Dendritic cell treated with granulocyte-macrophage colony-stimulating factor and Interleukin-4, amounts not matched to agents 40 ng/mL and 50 ng/mL, for 4 days (primary cell): ENCODE measurements at regions of chr3 and their contacts with region 1.

Region 1: DNA sequence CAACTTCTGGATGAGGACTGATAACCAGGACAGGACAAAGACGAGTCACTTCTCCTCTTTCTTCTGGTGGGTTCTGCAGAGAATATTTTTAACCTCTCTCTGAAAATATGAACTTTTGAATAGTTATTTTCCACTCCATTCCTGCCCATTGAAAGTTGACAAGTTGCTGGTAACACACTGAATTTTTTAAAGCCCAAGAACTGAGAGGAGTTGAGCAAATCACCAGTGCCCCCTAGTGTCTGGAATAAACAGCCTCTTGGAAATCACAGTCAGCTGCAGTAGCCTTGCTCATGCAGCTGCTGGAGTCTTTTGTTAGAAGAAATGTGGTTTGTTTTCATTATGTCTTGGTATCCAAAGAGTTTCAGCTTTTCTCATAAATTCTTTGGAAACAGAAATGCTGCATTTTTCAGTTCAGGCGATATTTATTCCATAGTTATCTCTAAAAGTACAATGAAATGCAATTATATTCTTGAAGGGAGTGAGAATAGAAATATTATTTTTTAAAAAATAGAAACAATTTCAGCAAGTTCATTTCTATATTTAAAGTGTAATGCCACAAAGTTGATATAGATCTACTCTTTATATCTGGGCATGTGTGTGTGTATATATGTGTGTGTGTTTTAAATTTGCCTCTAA is 741.0 kb upstream of the CBLB start:
- H3K4me3 Mint-ChIP-seq: no peak overlapping the region
- H3K27ac Mint-ChIP-seq: no peak overlapping the region
- H3K4me1 Mint-ChIP-seq: no peaks in the 10 kb centered on the region
- H3K27me3 Mint-ChIP-seq: no peaks in the 10 kb centered on the region

Region 2: GRCh38 chr3:105527949-105528348 is 1081.8 kb before region 1 on chr3:
- intact Hi-C with region 1: loop called (anchors 10 kb)
- H3K4me3 Mint-ChIP-seq: no peak overlapping the region
- H3K27ac Mint-ChIP-seq: no peak overlapping the region
- H3K4me1 Mint-ChIP-seq: no peaks in the 10 kb centered on the region
- H3K27me3 Mint-ChIP-seq: no peaks in the 10 kb centered on the region

Region 3: GRCh38 chr3:105686278-105686897 is 923.4 kb before region 1 on chr3:
- intact Hi-C with region 1: loop called (anchors 1 kb)
- H3K4me3 Mint-ChIP-seq: no peak overlapping the region
- H3K27ac Mint-ChIP-seq: no peak overlapping the region
- H3K4me1 Mint-ChIP-seq: no peaks in the 10 kb centered on the region
- H3K27me3 Mint-ChIP-seq: no peaks in the 10 kb centered on the region

Region 4: GRCh38 chr3:105853801-105854432 is 755.9 kb before region 1 on chr3:
- intact Hi-C with region 1: loop called (anchors 10 kb)
- H3K4me3 Mint-ChIP-seq: no peak overlapping the region
- H3K27ac Mint-ChIP-seq: no peak overlapping the region
- H3K4me1 Mint-ChIP-seq: peaks cover 5% of the 10 kb centered on the region
- H3K27me3 Mint-ChIP-seq: no peaks in the 10 kb centered on the region